ENCODE measurements at regions of chr1 and their contacts with region 1.

Region 1: DNA sequence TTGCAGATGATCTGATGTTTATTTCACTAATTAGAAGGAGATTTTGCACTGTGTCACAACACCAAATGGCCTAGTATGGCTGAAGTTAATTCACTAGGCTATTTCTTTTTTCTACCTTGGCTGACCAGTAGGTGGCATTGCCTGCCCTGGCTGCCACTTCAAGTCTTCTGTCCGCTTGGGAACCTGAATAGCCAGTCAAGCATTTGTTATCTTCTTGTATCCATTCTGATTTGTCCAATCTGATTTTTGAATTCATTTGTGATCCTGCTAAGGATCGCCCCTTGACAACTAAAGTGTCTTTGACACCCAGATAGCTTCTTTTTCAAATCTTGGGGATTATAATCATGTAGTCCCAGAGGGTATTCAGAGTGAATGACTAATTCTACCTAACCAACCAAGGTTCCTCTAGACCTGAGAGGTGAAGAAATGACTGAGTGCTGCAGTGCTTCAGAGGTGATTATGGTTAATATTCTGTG is 99.4 kb downstream of the GIPC2 start:
- DNase-seq: peak; percentile 45 to 74 (median 72)
- H3K4me3 ChIP-seq: no peak overlapping the region
- H3K27ac ChIP-seq: no peak overlapping the region
- H3K4me1 ChIP-seq: peaks cover 0 to 11% (median 8%) of the 10 kb centered on the region in 4 experiments
- H3K27me3 ChIP-seq: no peaks in the 10 kb centered on the region

Region 2: DNA sequence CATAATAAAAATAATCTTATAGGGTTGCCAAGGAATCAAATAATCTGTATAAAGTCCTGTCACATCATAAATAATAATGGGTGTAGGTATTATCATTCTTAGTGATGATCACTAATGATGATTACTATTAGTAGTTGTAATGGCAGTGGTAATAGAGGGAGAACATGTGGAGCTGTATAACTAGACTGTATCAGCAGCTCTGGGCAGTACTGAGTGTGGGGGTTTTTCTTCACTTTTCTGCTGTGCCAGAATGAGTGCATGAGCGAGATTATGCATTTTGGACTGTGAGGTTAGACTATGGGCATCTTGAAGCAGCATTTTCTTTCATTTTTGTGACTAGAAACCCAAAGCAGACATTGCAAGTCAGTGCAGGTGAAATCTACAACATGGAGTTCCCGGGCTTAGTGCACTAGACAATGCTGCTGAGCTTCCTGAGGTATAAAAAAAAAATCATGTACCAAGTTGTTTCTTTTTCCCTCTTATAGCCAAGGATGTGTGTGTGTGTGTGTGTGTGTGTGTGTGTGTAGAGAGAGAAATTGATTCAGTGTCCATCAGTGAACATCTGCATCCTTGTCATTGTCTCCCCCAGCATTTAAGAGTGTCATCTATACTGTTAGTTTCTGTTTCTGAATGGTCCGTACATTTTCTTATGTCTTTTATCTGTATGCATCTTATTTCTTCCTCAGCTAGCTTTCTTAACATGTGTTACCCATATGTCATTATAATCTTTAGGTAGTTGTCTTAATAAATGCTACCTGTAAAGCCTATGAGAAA is 12.8 kb before region 1 on chr1:
- CTCF ChIA-PET with region 1: interaction called, 47 read pairs
- POLR2A ChIA-PET with region 1: interaction called, 4 read pairs
- DNase-seq: no peak
- H3K4me3 ChIP-seq: no peak overlapping the region
- H3K27ac ChIP-seq: no peak overlapping the region
- H3K4me1 ChIP-seq: peaks cover 0 to 9% (median 1%) of the 10 kb centered on the region in 4 experiments
- H3K27me3 ChIP-seq: no peaks in the 10 kb centered on the region

Region 3: DNA sequence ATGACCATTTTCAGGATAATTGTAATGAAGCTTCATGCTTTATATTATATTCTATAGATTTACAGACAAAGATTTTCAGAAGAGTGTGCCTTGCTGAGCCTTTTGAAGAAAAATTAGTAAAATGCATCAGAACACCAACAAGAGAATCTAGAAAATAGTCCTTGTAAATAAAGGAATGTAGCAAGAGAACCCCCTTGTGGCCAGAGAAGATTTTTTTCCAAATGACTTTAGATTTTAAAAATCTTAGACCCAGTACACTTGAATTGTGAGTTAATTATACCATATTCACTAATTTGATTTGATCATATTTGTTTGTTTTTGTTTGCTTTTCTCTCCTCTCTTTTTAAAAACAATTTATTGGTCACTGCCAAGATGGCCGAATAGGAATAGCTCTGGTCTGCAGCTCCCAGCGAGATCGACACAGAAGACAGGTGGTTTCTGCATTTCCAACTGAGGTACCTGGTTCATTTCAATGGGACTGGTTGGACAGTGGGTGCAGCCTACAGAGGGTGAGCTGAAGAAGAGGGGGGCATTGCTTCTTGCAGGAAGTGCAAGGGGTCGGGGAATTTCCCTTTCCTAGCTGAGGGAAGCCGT is 462.3 kb after region 1 on chr1:
- CTCF ChIA-PET with region 1: interaction called, 13 read pairs
- POLR2A ChIA-PET with region 1: no interaction called
- DNase-seq: peak in 2 of 3 donors; percentile 37 to 51
- H3K4me3 ChIP-seq: no peak overlapping the region
- H3K27ac ChIP-seq: no peak overlapping the region
- H3K4me1 ChIP-seq: no peaks in the 10 kb centered on the region
- H3K27me3 ChIP-seq: no peaks in the 10 kb centered on the region

Region 4: DNA sequence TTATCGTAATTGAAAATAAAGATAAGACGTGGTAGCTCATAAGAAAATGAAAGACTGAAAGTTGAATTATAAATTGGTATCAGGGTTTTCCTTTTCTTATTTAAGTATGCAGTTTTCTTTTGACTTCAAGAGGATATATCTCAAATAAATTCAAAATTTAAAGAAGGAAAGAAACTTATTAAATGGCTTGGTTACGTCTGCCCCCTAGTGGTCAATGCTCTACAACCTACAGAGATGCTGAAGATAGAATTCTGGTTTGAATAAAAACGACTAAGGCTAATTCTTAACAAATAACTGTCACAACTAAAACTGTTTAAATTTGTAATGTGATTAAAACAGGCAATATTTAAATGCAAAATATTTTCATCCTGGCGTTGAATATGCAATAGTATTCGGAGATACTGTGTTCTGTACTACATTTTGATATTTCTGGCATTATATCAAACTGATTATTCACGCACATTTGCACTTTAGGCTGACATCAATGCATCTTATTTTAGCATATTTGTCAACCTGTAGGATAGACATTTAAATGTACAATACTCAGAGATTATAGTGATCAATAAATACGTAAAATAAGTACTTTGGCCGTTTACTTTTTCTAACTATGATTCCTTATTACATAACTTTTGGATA is 531.3 kb after region 1 on chr1:
- CTCF ChIA-PET with region 1: interaction called, 12 read pairs
- POLR2A ChIA-PET with region 1: no interaction called
- DNase-seq: peak; percentile 75 to 89 (median 81)
- H3K4me3 ChIP-seq: no peak overlapping the region
- H3K27ac ChIP-seq: no peak overlapping the region
- H3K4me1 ChIP-seq: peaks cover 0 to 4% (median 0%) of the 10 kb centered on the region in 4 experiments
- H3K27me3 ChIP-seq: no peaks in the 10 kb centered on the region